ENCODE measurements at regions of chr19 and their contacts with region 1.

Region 1: DNA sequence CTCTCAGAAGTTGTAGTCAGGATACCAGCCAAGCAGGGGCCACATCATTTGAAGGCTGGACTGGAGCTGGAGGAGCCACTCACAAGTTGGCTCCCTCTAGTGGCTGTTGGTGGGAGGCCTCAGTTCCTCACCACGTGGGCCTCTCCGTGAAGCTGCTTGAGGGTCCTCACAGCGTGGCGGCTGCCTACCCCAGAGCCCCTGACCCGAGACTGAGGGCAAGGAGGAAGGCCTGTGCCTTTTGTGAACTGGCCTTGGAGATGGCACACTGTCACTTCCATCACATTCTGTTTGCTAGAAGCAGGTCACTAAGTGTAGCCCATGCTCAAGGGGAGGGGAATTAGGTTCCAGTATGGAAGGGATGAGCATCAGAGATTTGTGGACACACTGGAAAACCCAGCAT is 14.6 kb downstream of the GNA11 start:
- DNase-seq: peak; percentile 81
- ATAC-seq: peak; percentile 84
- H3K4me3 Mint-ChIP-seq: no peak overlapping the region
- H3K27ac Mint-ChIP-seq: no peak overlapping the region
- H3K4me1 Mint-ChIP-seq: peaks cover 9% of the 10 kb centered on the region
- H3K27me3 Mint-ChIP-seq: no peaks in the 10 kb centered on the region

Region 2: GRCh38 chr19:2962045-2962561 is 146.7 kb before region 1 on chr19:
- CTCF ChIA-PET with region 1: interaction called, 68 read pairs
- DNase-seq: peak; percentile 51
- ATAC-seq: peak; percentile 75
- H3K4me3 Mint-ChIP-seq: no peak overlapping the region
- H3K27ac Mint-ChIP-seq: no peak overlapping the region
- H3K4me1 Mint-ChIP-seq: peaks cover 5% of the 10 kb centered on the region
- H3K27me3 Mint-ChIP-seq: peaks cover 3% of the 10 kb centered on the region

Region 3: GRCh38 chr19:3053218-3053699 is 55.5 kb before region 1 on chr19:
- CTCF ChIA-PET with region 1: interaction called, 20 read pairs
- DNase-seq: no peak
- ATAC-seq: no peak
- H3K4me3 Mint-ChIP-seq: no peak overlapping the region
- H3K27ac Mint-ChIP-seq: no peak overlapping the region
- H3K4me1 Mint-ChIP-seq: peaks cover 6% of the 10 kb centered on the region
- H3K27me3 Mint-ChIP-seq: no peaks in the 10 kb centered on the region

Region 4: GRCh38 chr19:3125900-3126524 is 17.2 kb after region 1 on chr19:
- CTCF ChIA-PET with region 1: interaction called, 51 read pairs
- DNase-seq: peak; percentile 69
- ATAC-seq: peak; percentile 93
- H3K4me3 Mint-ChIP-seq: no peak overlapping the region
- H3K27ac Mint-ChIP-seq: no peak overlapping the region
- H3K4me1 Mint-ChIP-seq: peaks cover 16% of the 10 kb centered on the region
- H3K27me3 Mint-ChIP-seq: no peaks in the 10 kb centered on the region

Measured in activated CD8-positive, alpha-beta memory T cell treated with anti-CD3 and anti-CD28 coated beads, Interleukin-2, amount 10 ng/mL, durations not matched to agents 7 days and 5 days (primary cell).